Thyroid gland (tissue), 4 donors: ENCODE measurements at regions of chr21 and their contacts with region 1.

Region 1: DNA sequence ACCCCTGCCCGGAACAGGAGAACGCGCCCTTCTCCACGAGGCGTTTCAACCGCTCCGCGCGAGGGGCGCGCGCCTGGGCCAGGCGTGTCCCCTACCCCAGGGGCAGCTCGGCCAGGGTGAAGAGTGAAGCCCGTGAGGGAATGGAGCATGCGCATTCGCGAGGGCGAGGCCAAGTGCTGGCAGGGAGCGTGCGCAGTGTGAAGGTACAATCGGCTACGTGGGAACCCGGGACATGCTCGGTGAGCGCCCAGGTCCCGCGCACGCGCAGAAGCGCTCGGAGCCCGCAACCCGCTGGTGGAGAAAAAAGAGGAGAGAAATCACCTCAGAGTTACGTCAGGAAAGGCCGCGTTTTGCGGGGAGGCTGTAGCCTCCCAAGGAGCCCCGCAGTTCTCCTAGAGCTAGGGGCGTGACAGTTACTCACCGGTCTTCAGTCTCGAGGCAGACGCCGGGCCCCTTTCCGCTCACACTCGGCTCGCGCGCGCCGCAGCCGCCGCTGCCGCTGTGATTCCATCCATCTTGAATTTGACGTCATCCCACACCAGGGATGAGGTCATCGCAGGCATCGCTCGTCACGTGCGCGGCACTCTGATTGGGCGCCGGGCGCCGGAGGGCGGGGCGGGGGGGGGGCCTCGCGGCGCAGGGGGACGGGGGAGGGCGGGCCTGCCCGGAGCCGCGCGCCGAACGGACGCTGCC is at the start of gene ZBTB21:
- DNase-seq: peak; percentile 99
- H3K4me3 ChIP-seq: peak within 1 kb of the TSS; percentile 44 to 83 (median 70)
- H3K27ac ChIP-seq: peak within 1 kb of the TSS; percentile 93 to 98 (median 98)
- H3K4me1 ChIP-seq: peaks cover 5 to 6% of the 10 kb centered on the region in 2 donors
- H3K27me3 ChIP-seq: no peaks in the 10 kb centered on the region
- CTCF ChIP-seq: no peak
- POLR2A ChIP-seq: peak; percentile 89 to 96
- total RNA-seq, gene ZBTB21: 16.3 to 33.5 (median 18.6) TPM

Region 2: DNA sequence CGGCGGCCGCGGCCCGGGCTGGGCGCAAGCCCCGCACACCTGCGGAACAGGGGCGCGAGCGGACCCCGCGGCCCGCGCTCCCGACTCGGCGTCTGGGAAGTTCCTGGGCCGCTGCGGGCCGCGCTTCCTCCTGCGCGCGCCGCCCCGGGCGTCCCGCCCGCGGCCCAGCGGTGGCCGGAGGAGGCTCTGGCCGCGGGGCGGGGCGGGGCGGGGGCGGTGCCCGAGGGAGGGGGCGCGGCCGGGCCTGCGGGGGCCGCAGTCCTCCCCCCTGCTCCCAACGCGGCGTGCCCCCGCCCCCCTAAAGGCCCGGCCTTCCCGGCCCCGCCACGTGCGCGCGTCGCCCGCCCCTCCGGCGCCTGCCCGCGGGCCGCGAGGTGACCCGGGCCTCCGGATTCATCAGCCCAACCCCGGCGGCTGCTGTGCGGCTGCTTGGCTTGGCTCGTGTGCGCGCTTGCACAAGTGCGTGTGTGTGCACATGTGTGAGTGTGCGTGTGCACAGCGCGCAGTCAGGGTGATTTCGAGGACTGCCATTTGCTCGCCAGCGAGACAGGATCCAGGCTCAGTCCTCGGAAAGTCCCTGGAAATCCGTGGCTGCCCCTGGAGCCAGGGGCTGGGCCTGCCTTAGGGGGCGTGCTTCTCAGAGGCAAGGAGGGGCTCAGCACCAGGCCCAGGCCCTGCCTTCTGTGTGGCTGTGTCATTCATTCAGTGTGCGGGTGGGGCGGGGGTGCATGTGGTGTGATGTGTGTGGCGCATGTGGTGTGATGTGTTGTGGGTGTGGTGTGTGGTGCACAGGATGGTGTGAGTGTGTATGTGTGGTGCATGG is 55.9 kb before region 1 on chr21 and contains the start of gene C2CD2:
- intact Hi-C with region 1: no loop called
- DNase-seq: peak; percentile 73 to 77
- H3K4me3 ChIP-seq: peak within 1 kb of the TSS; percentile 43 to 82 (median 60)
- H3K27ac ChIP-seq: peak within 1 kb of the TSS in 2 of 3 donors; percentile 41 to 49
- H3K4me1 ChIP-seq: peaks cover 13 to 29% of the 10 kb centered on the region in 2 donors
- H3K27me3 ChIP-seq: no peaks in the 10 kb centered on the region
- CTCF ChIP-seq: no peak
- POLR2A ChIP-seq: peak; percentile 34 to 75
- total RNA-seq, gene C2CD2: 12.7 to 22.7 (median 20.0) TPM

Region 3: DNA sequence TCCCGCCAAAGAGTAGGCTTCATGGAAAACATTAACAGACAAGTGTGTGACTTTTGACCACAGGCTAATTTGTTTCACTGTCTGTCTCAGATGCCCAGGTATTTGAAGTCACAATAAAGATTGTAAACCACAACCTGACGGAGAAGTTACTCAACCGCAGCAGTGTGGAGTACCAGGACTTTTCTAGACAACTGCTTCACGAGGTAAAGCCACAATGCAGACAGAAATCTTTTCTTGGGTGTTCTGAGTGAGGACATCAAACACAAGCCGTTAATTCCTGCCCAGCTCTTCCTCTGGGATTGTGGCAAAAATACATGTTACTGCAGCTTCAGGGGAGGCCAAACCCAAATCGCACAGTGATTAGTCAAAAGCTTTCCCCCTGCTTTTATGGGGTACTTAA is 92.1 kb after region 1 on chr21:
- intact Hi-C with region 1: loop called (anchors 5 kb)
- DNase-seq: no peak
- H3K4me3 ChIP-seq: no peak overlapping the region
- H3K27ac ChIP-seq: no peak overlapping the region
- H3K4me1 ChIP-seq: no peaks in the 10 kb centered on the region
- H3K27me3 ChIP-seq: no peaks in the 10 kb centered on the region
- CTCF ChIP-seq: no peak
- POLR2A ChIP-seq: no peak